Transverse colon (tissue), 4 donors: ENCODE measurements at regions of chr15 and their contacts with region 1.

Region 1: GRCh38 chr15:71294886-71295638 is 179.8 kb downstream of the THSD4 start:
- DNase-seq: peak; percentile 88
- H3K4me3 ChIP-seq: no peak overlapping the region
- H3K27ac ChIP-seq: peak overlapping the region; percentile 58 to 79 (median 74)
- H3K4me1 ChIP-seq: peaks cover 18 to 43% (median 23%) of the 10 kb centered on the region in 4 donors
- H3K27me3 ChIP-seq: no peaks in the 10 kb centered on the region
- CTCF ChIP-seq: peak in 1 of 5 experiments; percentile 6
- EP300 ChIP-seq: no peak
- POLR2A ChIP-seq: no peak

Region 2: DNA sequence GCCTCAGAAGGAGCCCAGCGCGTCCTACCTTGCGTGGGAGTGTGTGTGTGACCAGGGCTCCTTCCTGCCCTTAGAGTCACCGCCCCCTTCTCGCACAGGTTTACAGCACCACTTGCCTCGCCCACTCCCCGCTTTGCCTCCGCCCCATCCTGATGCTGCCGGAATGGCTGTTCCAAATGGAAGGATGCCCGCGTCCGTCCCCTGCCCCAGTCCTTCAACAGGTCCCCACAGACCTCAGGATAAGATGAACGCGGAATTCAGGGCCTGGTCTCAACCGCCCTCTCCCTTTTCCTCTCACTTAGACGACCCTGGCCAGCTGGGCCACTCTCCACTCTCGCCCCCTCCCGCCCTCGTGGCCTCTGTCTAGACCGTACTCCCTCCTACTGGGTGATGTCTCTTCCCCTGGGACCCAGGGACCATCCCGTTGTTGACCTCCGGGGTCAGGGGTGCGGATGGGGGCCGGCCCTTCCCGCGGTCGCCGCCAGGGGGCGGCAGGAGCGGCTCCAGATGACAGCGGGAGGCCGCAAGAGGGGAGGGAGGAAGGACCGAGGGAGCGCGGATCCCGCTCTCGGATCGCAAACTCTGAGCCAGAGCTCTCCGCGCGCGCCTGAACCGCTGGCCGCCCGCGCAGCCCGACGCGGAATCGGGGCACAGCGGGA is 180.0 kb before region 1 on chr15 and contains the start of gene THSD4:
- in situ Hi-C with region 1: no loop called
- intact Hi-C with region 1: no loop called
- DNase-seq: peak; percentile 78
- H3K4me3 ChIP-seq: peak within 1 kb of the TSS; percentile 36 to 81 (median 54)
- H3K27ac ChIP-seq: peak within 1 kb of the TSS; percentile 71 to 86 (median 80)
- H3K4me1 ChIP-seq: peaks cover 3 to 16% (median 9%) of the 10 kb centered on the region in 4 donors
- H3K27me3 ChIP-seq: peaks cover 8% of the 10 kb centered on the region
- CTCF ChIP-seq: peak; percentile 92 to 98 (median 96)
- EP300 ChIP-seq: no peak
- POLR2A ChIP-seq: no peak
- total RNA-seq, gene THSD4: 13.3 to 57.2 (median 47.4) TPM

Region 3: DNA sequence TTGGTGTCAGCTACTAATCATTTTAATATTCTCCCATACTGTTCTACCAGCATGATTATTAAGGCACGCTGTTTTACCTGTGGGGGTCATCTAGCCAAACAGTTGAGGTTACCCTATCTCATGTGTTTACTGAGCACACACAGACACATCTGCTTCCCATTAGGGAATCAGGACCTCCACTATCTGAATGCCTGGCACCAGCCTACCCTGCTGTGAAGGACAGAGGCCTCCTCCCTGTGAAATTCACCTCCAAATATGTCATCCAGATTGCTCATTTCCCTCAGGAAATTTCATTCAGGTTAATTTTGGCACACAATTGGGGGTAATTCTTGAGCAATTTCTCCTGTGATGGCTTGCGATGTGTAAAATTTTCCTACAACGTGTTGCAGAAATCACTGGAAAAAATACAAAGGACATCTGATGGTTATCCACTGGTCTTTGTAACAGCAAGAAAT is 359.7 kb after region 1 on chr15:
- in situ Hi-C with region 1: no loop called
- intact Hi-C with region 1: loop called (anchors 5 kb)
- DNase-seq: no peak
- H3K4me3 ChIP-seq: no peak overlapping the region
- H3K27ac ChIP-seq: no peak overlapping the region
- H3K4me1 ChIP-seq: no peaks in the 10 kb centered on the region
- H3K27me3 ChIP-seq: no peaks in the 10 kb centered on the region
- CTCF ChIP-seq: no peak
- EP300 ChIP-seq: no peak
- POLR2A ChIP-seq: no peak

Region 4: DNA sequence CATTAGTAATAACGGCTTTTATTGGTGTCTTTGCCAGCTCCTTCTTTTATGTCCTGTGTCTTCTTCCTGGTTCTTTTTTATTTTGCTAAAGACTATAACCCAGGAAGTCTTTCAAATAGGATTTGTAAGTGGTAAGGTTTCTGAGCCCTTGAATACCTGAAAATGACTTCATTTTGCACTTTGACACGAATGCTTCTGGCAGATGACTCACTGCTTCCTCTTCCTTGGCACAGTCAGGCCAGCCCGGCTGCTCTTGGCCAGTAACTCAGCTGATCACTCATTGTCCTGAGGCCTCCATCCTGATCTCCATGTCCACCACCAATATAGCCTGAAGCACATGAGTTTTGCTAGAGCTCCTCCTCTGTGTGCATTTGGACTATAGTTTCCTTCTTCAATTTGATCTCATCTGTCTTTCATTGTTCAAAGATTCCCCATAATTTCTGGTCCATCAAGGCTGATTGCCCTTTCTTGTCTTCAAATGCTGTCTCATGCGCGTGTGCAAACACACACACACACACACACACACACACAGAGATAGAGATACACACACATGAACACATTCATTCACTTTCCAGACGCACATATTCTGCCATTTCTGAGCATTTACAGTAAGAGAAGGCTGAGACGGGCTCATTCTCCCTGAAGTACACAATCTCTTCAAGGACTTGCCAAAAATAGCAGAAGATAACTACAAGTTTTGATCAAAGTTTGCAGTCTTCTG is 466.7 kb after region 1 on chr15:
- in situ Hi-C with region 1: no loop called
- intact Hi-C with region 1: no loop called
- DNase-seq: peak; percentile 71
- H3K4me3 ChIP-seq: no peak overlapping the region
- H3K27ac ChIP-seq: peak overlapping the region; percentile 32 to 70 (median 49)
- H3K4me1 ChIP-seq: peaks cover 8 to 38% (median 17%) of the 10 kb centered on the region in 4 donors
- H3K27me3 ChIP-seq: no peaks in the 10 kb centered on the region
- CTCF ChIP-seq: no peak
- EP300 ChIP-seq: no peak
- POLR2A ChIP-seq: no peak